ENCODE measurements at regions of chr9 and their contacts with region 1.

Region 1: GRCh38 chr9:36092509-36093215 is 43.9 kb upstream of the GLIPR2 start:
- DNase-seq: peak; percentile 76
- ATAC-seq: peak; percentile 98
- H3K4me3 ChIP-seq: peak overlapping the region in 1 of 5 experiments; percentile 41
- H3K4me3 Mint-ChIP-seq: peak overlapping the region; percentile 69
- H3K27ac ChIP-seq: peak overlapping the region; percentile 48 to 83
- H3K27ac Mint-ChIP-seq: peak overlapping the region; percentile 84
- H3K4me1 ChIP-seq: peaks cover 13 to 15% of the 10 kb centered on the region in 2 donors
- H3K4me1 Mint-ChIP-seq: peaks cover 14% of the 10 kb centered on the region
- H3K27me3 ChIP-seq: no peaks in the 10 kb centered on the region
- H3K27me3 Mint-ChIP-seq: no peaks in the 10 kb centered on the region
- CTCF ChIP-seq: no peak

Region 2: GRCh38 chr9:36036780-36037548 is 55.7 kb before region 1 on chr9 and contains the start of gene RECK:
- CTCF ChIA-PET with region 1: no interaction called
- POLR2A ChIA-PET with region 1: no interaction called
- intact Hi-C with region 1: loop called (anchors 2 kb)
- DNase-seq: peak; percentile 88
- ATAC-seq: peak; percentile 98
- H3K4me3 ChIP-seq: peak within 1 kb of the TSS; percentile 52 to 82 (median 74)
- H3K4me3 Mint-ChIP-seq: peak within 1 kb of the TSS; percentile 88
- H3K27ac ChIP-seq: peak within 1 kb of the TSS in 1 of 2 donors; percentile 55
- H3K27ac Mint-ChIP-seq: peak within 1 kb of the TSS; percentile 76
- H3K4me1 ChIP-seq: peaks cover 19 to 21% of the 10 kb centered on the region in 2 donors
- H3K4me1 Mint-ChIP-seq: peaks cover 25% of the 10 kb centered on the region
- H3K27me3 ChIP-seq: peaks cover 0 to 3% (median 0%) of the 10 kb centered on the region in 4 experiments
- H3K27me3 Mint-ChIP-seq: no peaks in the 10 kb centered on the region
- CTCF ChIP-seq: no peak
- total RNA-seq, gene RECK: 7.7 and 7.9 TPM in 2 replicates

Region 3: DNA sequence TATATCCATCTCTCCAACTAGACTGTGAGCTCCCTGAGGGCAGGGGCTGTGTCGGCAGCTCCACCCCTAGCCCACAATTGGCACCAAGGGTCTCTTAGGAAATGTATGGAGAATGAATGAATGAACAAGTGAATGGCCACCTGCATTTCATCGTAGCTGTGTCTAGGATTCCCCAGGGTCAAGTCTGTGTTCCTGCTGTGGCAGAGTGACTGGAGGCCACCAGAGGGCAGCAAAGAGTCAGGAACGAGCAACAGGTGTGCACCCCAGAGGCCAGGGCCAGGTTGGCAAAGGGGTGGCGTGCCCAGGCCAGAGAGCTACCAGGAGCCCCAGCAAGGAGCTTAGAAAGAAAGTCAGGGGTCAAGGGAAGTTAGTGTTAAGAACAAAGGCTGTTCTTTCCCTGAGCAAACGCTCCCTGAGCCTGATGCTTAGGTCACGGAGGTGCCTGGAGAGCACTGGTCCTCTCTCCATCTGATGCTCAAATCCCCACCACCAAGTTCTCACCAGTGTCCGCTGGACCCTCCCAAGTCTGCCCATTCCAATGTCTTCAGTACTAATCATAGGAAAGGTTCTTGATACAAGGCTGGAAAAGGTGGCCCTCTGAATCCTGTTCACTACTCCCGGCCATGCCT is 780.7 kb after region 1 on chr9:
- CTCF ChIA-PET with region 1: no interaction called
- POLR2A ChIA-PET with region 1: no interaction called
- intact Hi-C with region 1: no loop called
- DNase-seq: peak; percentile 83
- ATAC-seq: peak; percentile 88
- H3K4me3 ChIP-seq: no peak overlapping the region
- H3K4me3 Mint-ChIP-seq: no peak overlapping the region
- H3K27ac ChIP-seq: peak overlapping the region; percentile 41 to 71
- H3K27ac Mint-ChIP-seq: peak overlapping the region; percentile 94
- H3K4me1 ChIP-seq: peaks cover 30 to 52% of the 10 kb centered on the region in 2 donors
- H3K4me1 Mint-ChIP-seq: peaks cover 66% of the 10 kb centered on the region
- H3K27me3 ChIP-seq: no peaks in the 10 kb centered on the region
- H3K27me3 Mint-ChIP-seq: no peaks in the 10 kb centered on the region
- CTCF ChIP-seq: peak; percentile 89